ENCODE measurements at regions of chr17 and their contacts with region 1.

Region 1: DNA sequence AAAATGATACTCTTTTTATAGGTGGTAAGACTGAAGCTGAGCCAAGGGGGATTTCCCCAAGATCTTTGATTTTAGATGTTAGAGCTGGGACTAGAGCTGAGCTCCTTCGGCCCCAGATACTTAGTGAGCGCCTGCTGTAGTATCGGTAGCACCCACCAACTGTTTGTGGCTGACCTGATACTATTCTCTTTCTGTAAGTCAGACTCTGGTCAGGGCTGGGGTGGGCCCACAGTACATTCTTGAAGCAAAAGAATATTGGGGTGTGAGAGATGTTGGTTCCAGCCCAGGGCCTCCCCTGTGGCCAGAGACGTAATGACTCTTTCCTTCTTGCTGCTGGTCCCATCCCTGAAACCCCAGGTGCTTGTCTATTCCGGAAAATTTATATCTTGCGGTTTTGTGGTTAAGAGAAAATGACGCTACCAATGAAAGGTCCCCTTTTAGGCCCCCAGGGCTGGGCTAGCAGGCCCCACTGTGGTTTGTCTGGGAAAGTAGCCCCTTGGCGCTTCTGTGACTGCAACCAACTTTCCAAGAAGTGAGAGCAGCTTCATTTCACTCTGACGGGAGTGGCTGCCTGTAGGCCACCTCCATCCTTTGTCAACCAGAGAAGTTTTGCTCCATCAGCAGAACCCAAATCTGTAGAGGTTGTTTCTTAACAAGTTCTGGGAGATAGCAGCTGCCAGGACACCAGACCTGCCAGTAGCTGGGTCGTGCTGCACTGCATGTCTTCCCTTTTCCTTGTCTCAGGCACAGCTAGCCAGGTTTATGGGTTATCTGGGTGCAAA is 86.4 kb upstream of the LGALS9 start:
- DNase-seq: peak; percentile 71
- ATAC-seq: peak; percentile 84
- H3K4me3 Mint-ChIP-seq: peak overlapping the region; percentile 77
- H3K27ac Mint-ChIP-seq: peak overlapping the region; percentile 91
- H3K4me1 Mint-ChIP-seq: peaks cover 68% of the 10 kb centered on the region
- H3K27me3 Mint-ChIP-seq: no peaks in the 10 kb centered on the region

Region 2: DNA sequence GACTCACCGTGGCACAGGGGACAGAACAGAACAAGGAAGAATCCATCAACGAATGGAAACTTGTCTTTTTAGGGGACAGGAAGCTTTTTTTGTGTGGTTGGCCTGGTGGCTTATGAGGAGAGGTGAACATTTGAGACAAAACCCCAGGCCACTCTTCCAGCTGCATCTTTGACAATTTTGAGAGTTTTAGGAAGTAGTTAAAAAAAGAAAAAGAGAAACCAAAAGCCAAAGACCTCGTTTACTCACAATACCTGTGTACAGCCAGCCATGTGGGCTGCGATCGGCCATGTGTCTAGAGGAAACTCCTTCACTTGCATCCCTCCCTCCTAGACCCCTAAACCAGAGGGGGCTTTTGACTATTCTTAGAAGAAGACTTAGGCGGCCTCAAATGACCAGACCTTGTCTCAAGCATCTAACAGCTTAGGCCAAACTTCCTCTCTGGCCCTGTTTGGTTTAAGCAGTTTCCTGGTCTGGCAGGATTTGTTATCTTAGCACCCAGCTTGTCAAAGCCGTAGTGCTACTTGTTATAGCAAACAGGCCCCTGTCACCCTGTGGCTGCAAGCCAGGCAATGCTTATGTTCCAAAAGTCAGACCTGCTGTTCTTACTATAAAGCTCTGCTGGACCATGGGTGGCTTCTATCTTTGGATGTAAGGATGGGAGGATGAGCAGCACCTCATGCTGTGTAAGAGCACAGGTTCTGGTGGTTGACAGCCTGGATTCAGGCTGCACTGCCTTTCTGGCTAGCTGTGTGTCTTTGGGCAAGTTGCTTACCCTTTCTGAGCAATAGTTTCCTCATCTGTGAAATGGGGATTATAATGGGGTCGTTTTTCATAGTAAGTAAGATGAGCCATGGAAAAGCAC is 70.6 kb before region 1 on chr17:
- POLR2A ChIA-PET with region 1: interaction called, 23 read pairs
- DNase-seq: peak; percentile 61
- ATAC-seq: peak; percentile 44
- H3K4me3 Mint-ChIP-seq: peak overlapping the region; percentile 67
- H3K27ac Mint-ChIP-seq: peak overlapping the region; percentile 99
- H3K4me1 Mint-ChIP-seq: peaks cover 82% of the 10 kb centered on the region
- H3K27me3 Mint-ChIP-seq: no peaks in the 10 kb centered on the region

Region 3: GRCh38 chr17:27533856-27534815 is 10.4 kb before region 1 on chr17:
- POLR2A ChIA-PET with region 1: interaction called, 10 read pairs
- DNase-seq: no peak
- ATAC-seq: no peak
- H3K4me3 Mint-ChIP-seq: no peak overlapping the region
- H3K27ac Mint-ChIP-seq: no peak overlapping the region
- H3K4me1 Mint-ChIP-seq: peaks cover 56% of the 10 kb centered on the region
- H3K27me3 Mint-ChIP-seq: no peaks in the 10 kb centered on the region

Measured in activated naive CD8-positive, alpha-beta T cell treated with anti-CD3 and anti-CD28 coated beads, Interleukin-2, amount 10 ng/mL, durations not matched to agents 7 days and 5 days (primary cell).